Mammary epithelial cell (primary cell): ENCODE measurements at regions of chr1 and their contacts with region 1.

Region 1: GRCh38 chr1:77888081-77888780 is at the start of gene NEXN:
- DNase-seq: peak; percentile 52
- H3K4me3 ChIP-seq: peak within 1 kb of the TSS; percentile 81 to 88 (median 84)
- H3K27ac ChIP-seq: peak within 1 kb of the TSS; percentile 86
- H3K4me1 ChIP-seq: peaks cover 9% of the 10 kb centered on the region
- H3K27me3 ChIP-seq: no peaks in the 10 kb centered on the region
- CTCF ChIP-seq: peak in 1 of 2 donors; percentile 2
- total RNA-seq, gene NEXN: 6.3 to 8.2 TPM

Region 2: GRCh38 chr1:77825131-77825709 is 63.0 kb before region 1 on chr1:
- CTCF ChIA-PET with region 1: no interaction called
- dilution Hi-C with region 1: no loop called
- in situ Hi-C with region 1: no loop called
- intact Hi-C with region 1: loop called (anchors 1 kb)
- DNase-seq: peak; percentile 95
- H3K4me3 ChIP-seq: no peak overlapping the region
- H3K27ac ChIP-seq: peak overlapping the region; percentile 69
- H3K4me1 ChIP-seq: peaks cover 18% of the 10 kb centered on the region
- H3K27me3 ChIP-seq: no peaks in the 10 kb centered on the region
- CTCF ChIP-seq: peak; percentile 8 to 47

Region 3: DNA sequence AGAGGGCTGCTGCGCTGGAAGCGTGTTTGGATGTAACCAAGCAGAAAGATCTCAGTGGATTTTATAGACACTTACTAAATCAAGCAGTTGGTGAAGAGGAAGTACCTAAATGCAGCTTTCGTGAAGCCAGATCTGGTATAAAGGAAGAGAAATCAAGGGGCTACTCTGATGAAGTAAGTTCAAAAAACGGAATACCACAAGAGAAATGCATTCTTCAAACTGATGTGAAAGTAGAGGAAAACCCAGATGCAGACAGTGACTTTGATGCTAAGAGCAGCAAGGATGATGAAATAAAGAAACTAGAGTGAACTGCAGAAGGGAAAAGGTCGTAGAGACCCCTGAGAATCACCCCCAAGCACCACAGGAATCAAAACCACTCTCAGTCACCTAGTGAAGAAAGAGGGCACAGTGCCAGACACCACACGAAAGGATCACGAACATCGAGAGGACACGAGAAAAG is 40.6 kb before region 1 on chr1:
- CTCF ChIA-PET with region 1: no interaction called
- dilution Hi-C with region 1: no loop called
- in situ Hi-C with region 1: no loop called
- intact Hi-C with region 1: no loop called
- DNase-seq: no peak
- H3K4me3 ChIP-seq: no peak overlapping the region
- H3K27ac ChIP-seq: no peak overlapping the region
- H3K4me1 ChIP-seq: no peaks in the 10 kb centered on the region
- H3K27me3 ChIP-seq: no peaks in the 10 kb centered on the region
- CTCF ChIP-seq: no peak

Region 4: GRCh38 chr1:77940921-77941570 is 52.8 kb after region 1 on chr1:
- CTCF ChIA-PET with region 1: no interaction called
- dilution Hi-C with region 1: no loop called
- in situ Hi-C with region 1: no loop called
- intact Hi-C with region 1: no loop called
- DNase-seq: no peak
- H3K4me3 ChIP-seq: no peak overlapping the region
- H3K27ac ChIP-seq: no peak overlapping the region
- H3K4me1 ChIP-seq: no peaks in the 10 kb centered on the region
- H3K27me3 ChIP-seq: no peaks in the 10 kb centered on the region
- CTCF ChIP-seq: no peak

Region 5: DNA sequence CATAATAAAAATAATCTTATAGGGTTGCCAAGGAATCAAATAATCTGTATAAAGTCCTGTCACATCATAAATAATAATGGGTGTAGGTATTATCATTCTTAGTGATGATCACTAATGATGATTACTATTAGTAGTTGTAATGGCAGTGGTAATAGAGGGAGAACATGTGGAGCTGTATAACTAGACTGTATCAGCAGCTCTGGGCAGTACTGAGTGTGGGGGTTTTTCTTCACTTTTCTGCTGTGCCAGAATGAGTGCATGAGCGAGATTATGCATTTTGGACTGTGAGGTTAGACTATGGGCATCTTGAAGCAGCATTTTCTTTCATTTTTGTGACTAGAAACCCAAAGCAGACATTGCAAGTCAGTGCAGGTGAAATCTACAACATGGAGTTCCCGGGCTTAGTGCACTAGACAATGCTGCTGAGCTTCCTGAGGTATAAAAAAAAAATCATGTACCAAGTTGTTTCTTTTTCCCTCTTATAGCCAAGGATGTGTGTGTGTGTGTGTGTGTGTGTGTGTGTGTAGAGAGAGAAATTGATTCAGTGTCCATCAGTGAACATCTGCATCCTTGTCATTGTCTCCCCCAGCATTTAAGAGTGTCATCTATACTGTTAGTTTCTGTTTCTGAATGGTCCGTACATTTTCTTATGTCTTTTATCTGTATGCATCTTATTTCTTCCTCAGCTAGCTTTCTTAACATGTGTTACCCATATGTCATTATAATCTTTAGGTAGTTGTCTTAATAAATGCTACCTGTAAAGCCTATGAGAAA is 244.1 kb after region 1 on chr1:
- CTCF ChIA-PET with region 1: no interaction called
- dilution Hi-C with region 1: no loop called
- in situ Hi-C with region 1: no loop called
- intact Hi-C with region 1: no loop called
- DNase-seq: no peak
- H3K4me3 ChIP-seq: no peak overlapping the region
- H3K27ac ChIP-seq: no peak overlapping the region
- H3K4me1 ChIP-seq: no peaks in the 10 kb centered on the region
- H3K27me3 ChIP-seq: no peaks in the 10 kb centered on the region
- CTCF ChIP-seq: no peak

Region 6: DNA sequence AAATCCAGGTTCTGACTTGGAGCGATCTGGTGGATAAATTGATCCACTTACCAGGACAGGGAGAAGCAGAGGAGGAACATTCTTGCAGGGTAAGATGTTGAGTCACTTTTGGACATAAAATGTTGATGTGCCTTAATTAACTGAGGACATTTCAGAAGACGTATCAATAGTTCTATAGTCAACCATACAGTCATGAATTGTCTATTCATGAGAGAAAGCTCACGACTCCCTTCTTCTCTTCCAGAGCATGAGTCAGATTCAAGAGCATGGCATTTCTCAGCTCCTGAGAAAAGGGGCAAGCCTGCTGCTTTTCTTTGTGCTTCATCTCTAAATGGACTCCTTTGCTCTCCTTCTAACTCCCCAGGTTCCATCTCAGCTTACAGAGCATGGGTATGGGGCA is 1062.6 kb after region 1 on chr1:
- CTCF ChIA-PET with region 1: no interaction called
- dilution Hi-C with region 1: no loop called
- in situ Hi-C with region 1: no loop called
- intact Hi-C with region 1: no loop called
- DNase-seq: no peak
- H3K4me3 ChIP-seq: no peak overlapping the region
- H3K27ac ChIP-seq: no peak overlapping the region
- H3K4me1 ChIP-seq: no peaks in the 10 kb centered on the region
- H3K27me3 ChIP-seq: peaks cover 2% of the 10 kb centered on the region
- CTCF ChIP-seq: no peak